CD4-positive, alpha-beta memory T cell (primary cell): ENCODE measurements at regions of chr14 and their contacts with region 1.

Region 1: DNA sequence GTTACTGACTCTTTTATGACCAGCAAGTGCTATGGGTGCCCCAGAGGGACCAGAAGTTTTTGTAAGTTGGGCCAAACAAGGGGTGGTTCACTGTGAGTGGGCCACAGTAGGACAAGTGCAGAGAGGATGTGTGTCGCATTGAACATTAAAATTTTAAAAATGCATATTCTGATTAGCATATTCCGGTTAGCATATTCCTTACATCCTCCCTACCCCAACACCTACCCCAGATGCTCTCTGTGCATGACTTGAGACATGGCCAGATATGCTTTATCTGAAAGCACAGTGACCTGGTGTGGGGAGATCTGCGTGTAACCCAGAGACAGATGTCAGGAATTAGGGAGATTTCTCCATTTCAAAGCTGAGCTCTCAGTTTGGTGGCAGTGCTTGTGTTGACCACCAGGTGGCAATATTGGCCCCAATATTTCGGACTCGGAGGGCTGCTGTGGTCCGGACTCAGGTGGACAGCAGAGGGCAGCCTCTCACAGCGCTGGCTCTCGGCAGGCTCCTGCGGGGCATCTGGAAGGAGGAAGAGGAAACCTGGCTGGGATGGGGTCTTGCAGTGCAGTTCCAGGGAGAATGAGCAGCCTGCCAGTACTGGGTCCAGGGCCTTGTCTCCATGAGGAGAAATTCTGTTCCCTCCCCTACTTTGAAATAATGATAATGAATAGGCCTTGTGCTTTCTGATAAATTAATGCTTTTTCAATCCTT is 1.6 kb upstream of the CEBPE start:
- DNase-seq: peak; percentile 68 to 76 (median 75)
- H3K4me3 ChIP-seq: peak overlapping the region in 1 of 2 donors; percentile 20
- H3K4me3 Mint-ChIP-seq: peak overlapping the region; percentile 40 to 90 (median 80)
- H3K27ac ChIP-seq: peak overlapping the region; percentile 49
- H3K27ac Mint-ChIP-seq: peak overlapping the region; percentile 86 to 95 (median 91)
- H3K4me1 ChIP-seq: peaks cover 57% of the 10 kb centered on the region
- H3K4me1 Mint-ChIP-seq: peaks cover 28 to 55% (median 34%) of the 10 kb centered on the region in 4 donors
- H3K27me3 ChIP-seq: no peaks in the 10 kb centered on the region
- H3K27me3 Mint-ChIP-seq: no peaks in the 10 kb centered on the region

Region 2: GRCh38 chr14:23076785-23077408 is 43.8 kb before region 1 on chr14:
- CTCF ChIA-PET with region 1: interaction called, 18 read pairs
- POLR2A ChIA-PET with region 1: interaction called, 6 read pairs
- intact Hi-C with region 1: loop called (anchors 2 kb)
- DNase-seq: peak in 4 of 5 donors; percentile 25 to 42 (median 38)
- H3K4me3 ChIP-seq: no peak overlapping the region
- H3K4me3 Mint-ChIP-seq: no peak overlapping the region
- H3K27ac ChIP-seq: no peak overlapping the region
- H3K27ac Mint-ChIP-seq: peak overlapping the region in 3 of 7 donors; percentile 16 to 70 (median 57)
- H3K4me1 ChIP-seq: peaks cover 5% of the 10 kb centered on the region
- H3K4me1 Mint-ChIP-seq: peaks cover 6 to 15% (median 10%) of the 10 kb centered on the region in 4 donors
- H3K27me3 ChIP-seq: no peaks in the 10 kb centered on the region
- H3K27me3 Mint-ChIP-seq: no peaks in the 10 kb centered on the region

Region 3: GRCh38 chr14:23154964-23155587 is 34.4 kb after region 1 on chr14:
- CTCF ChIA-PET with region 1: interaction called, 10 read pairs
- POLR2A ChIA-PET with region 1: no interaction called
- intact Hi-C with region 1: no loop called
- DNase-seq: no peak
- H3K4me3 ChIP-seq: no peak overlapping the region
- H3K4me3 Mint-ChIP-seq: peak overlapping the region in 6 of 8 donors; percentile 14 to 56 (median 43)
- H3K27ac ChIP-seq: no peak overlapping the region
- H3K27ac Mint-ChIP-seq: peak overlapping the region in 1 of 7 donors; percentile 14
- H3K4me1 ChIP-seq: peaks cover 16% of the 10 kb centered on the region
- H3K4me1 Mint-ChIP-seq: peaks cover 2 to 14% (median 10%) of the 10 kb centered on the region in 4 donors
- H3K27me3 ChIP-seq: peaks cover 8% of the 10 kb centered on the region
- H3K27me3 Mint-ChIP-seq: peaks cover 6 to 8% of the 10 kb centered on the region in 2 donors

Region 4: GRCh38 chr14:23186913-23187654 is 66.4 kb after region 1 on chr14:
- CTCF ChIA-PET with region 1: interaction called, 151 read pairs
- POLR2A ChIA-PET with region 1: interaction called, 23 read pairs
- intact Hi-C with region 1: loop called (anchors 1 kb)
- DNase-seq: peak in 3 of 5 donors; percentile 22 to 33 (median 29)
- H3K4me3 ChIP-seq: no peak overlapping the region
- H3K4me3 Mint-ChIP-seq: no peak overlapping the region
- H3K27ac ChIP-seq: no peak overlapping the region
- H3K27ac Mint-ChIP-seq: no peak overlapping the region
- H3K4me1 ChIP-seq: peaks cover 12% of the 10 kb centered on the region
- H3K4me1 Mint-ChIP-seq: peaks cover 0 to 3% (median 0%) of the 10 kb centered on the region in 4 donors
- H3K27me3 ChIP-seq: peaks cover 8% of the 10 kb centered on the region
- H3K27me3 Mint-ChIP-seq: peaks cover 0 to 7% of the 10 kb centered on the region in 2 donors

Region 5: GRCh38 chr14:23301288-23301968 is 180.7 kb after region 1 on chr14:
- CTCF ChIA-PET with region 1: interaction called, 25 read pairs
- POLR2A ChIA-PET with region 1: interaction called, 21 read pairs
- intact Hi-C with region 1: loop called (anchors 1 kb)
- DNase-seq: peak; percentile 95 to 99 (median 98)
- H3K4me3 ChIP-seq: peak overlapping the region; percentile 86 to 90
- H3K4me3 Mint-ChIP-seq: peak overlapping the region; percentile 89 to 100 (median 90)
- H3K27ac ChIP-seq: peak overlapping the region; percentile 87
- H3K27ac Mint-ChIP-seq: peak overlapping the region; percentile 92 to 99 (median 96)
- H3K4me1 ChIP-seq: peaks cover 14% of the 10 kb centered on the region
- H3K4me1 Mint-ChIP-seq: peaks cover 14 to 29% (median 23%) of the 10 kb centered on the region in 4 donors
- H3K27me3 ChIP-seq: no peaks in the 10 kb centered on the region
- H3K27me3 Mint-ChIP-seq: peaks cover 8 to 9% of the 10 kb centered on the region in 2 donors

Region 6: GRCh38 chr14:23379366-23380196 is 258.9 kb after region 1 on chr14:
- CTCF ChIA-PET with region 1: interaction called, 27 read pairs
- POLR2A ChIA-PET with region 1: no interaction called
- intact Hi-C with region 1: loop called (anchors 1 kb)
- DNase-seq: peak; percentile 54 to 67 (median 65)
- H3K4me3 ChIP-seq: no peak overlapping the region
- H3K4me3 Mint-ChIP-seq: no peak overlapping the region
- H3K27ac ChIP-seq: no peak overlapping the region
- H3K27ac Mint-ChIP-seq: peak overlapping the region in 1 of 7 donors; percentile 4
- H3K4me1 ChIP-seq: no peaks in the 10 kb centered on the region
- H3K4me1 Mint-ChIP-seq: no peaks in the 10 kb centered on the region
- H3K27me3 ChIP-seq: no peaks in the 10 kb centered on the region
- H3K27me3 Mint-ChIP-seq: peaks cover 5 to 11% of the 10 kb centered on the region in 2 donors